HEK293 (cell line): ENCODE measurements at regions of chr11 and their contacts with region 1.

Region 1: GRCh38 chr11:20397281-20397680 is 9.8 kb downstream of the PRMT3 start:
- H3K4me3 ChIP-seq: no peak overlapping the region
- H3K27ac ChIP-seq: no peak overlapping the region
- H3K4me1 ChIP-seq: no peaks in the 10 kb centered on the region
- CTCF ChIP-seq: no peak

Region 2: DNA sequence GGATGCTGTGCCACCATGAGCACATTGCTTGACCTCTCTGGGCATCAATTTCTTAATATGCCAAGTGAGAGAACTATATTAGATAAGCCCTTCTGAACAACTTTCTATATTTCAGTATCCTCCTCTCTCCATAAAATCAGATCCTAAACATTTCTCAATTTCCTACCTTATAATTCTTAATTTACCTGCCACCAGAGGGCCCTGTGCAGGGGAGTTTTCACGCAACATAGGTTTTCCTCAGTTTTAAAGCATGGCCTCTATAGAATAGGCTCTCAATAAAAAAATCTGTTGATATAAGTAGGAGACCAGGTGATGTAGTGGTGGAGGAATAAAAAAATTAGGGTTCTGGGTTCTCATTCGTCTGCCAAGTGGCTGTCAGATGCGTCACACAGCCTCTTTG is 153.3 kb before region 1 on chr11:
- CTCF ChIA-PET with region 1: no interaction called
- POLR2A ChIA-PET with region 1: no interaction called
- H3K4me3 ChIP-seq: no peak overlapping the region
- H3K27ac ChIP-seq: no peak overlapping the region
- H3K4me1 ChIP-seq: peaks cover 4% of the 10 kb centered on the region; the same call in 1 of the 2 replicates
- CTCF ChIP-seq: no peak

Region 3: DNA sequence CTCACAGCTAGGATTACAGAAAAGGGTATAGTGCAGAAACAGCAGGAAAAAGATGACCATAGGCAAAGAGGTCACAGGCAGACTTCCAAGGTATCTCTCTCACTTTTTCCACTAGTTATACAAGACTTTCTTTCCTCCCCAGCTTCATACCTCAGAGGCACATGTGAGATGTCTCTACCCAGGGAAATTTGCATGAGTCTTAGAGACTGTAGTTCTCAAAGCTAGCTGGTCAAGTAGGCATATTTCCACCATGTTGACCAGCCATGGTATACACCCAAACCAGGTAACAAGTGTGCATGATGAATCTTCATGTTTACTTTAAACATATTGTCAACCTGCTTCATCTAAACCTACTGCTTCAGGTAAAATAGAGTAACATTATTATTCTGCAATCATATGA is 18.2 kb after region 1 on chr11:
- CTCF ChIA-PET with region 1: interaction called, 11 read pairs
- POLR2A ChIA-PET with region 1: no interaction called
- H3K4me3 ChIP-seq: no peak overlapping the region
- H3K27ac ChIP-seq: no peak overlapping the region
- H3K4me1 ChIP-seq: no peaks in the 10 kb centered on the region
- CTCF ChIP-seq: no peak